ENCODE measurements at regions of chr14 and their contacts with region 1.

Region 1: DNA sequence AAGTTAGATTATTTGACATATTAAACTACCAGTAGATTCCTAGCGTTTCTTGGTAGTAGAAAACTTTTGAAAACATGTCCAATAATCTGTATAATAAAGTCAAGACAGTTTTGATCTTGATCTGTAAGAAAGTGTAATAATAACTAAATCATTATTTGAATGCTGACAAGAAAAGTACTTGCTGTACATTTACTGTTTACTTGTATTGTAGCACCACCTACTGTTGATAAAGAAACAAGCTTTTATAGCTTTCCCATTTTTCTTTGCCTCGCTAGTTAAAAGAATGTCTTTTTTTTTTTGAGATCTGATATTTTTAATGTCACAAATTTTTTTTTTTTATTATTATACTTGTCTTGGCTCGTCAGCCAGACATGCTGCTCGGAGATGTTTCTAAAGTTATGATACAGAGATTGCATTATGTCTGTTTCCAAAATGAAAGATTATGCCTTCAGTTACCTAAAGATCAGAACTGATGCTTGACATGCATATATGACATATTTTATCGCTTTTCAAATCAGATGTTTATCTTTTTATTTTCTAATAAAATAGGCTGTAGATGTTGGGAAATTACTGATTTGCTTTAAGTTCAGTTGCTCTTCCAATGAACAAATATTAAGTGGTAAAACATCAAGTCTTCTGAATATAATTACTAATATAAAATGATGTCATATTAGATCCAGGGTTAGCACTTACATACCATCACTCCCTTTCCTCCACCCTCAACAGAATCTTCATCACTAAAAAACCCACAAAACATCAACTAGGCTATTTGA is 140.5 kb downstream of the AKAP6 start:
- DNase-seq: no peak

Region 2: GRCh38 chr14:32329146-32329545 is 140.4 kb before region 1 on chr14 and contains the start of gene AKAP6:
- intact Hi-C with region 1: loop called (anchors 5 kb)
- DNase-seq: peak in 8 of 10 donors; percentile 43 to 92 (median 70)

Region 3: GRCh38 chr14:32509632-32510187 is 40.1 kb after region 1 on chr14:
- intact Hi-C with region 1: loop called (anchors 5 kb)
- DNase-seq: peak; percentile 43 to 96 (median 76)

Region 4: DNA sequence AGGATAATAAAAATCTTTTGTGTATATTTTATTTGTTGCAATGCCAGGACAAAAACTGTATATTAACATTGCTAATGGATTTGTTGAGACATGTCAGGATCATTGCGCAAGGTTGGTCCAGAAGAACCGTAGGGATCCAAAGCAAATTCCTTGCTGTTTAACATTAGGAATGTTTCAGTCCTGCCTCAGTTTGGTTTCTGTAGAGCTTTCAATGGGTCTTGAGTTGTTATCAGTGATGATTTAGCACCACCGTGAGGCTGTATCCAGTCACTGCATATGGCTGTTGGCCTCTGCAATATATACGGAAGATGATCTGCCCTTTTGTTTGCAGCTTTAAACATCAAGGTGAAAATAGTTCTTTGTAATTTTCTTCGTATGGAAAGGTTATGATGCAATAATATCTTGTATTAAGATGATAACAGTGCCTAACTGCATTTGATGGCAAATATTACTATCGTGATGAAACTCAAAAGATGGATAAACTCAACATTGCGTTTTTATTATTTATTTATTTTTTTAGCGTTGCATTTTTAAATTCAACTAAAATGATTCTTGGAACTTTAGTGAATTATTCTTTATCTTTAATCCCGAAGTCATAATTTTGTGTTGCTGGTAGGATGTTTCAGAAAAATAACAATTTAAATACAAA is 90.8 kb after region 1 on chr14:
- intact Hi-C with region 1: loop called (anchors 10 kb)
- DNase-seq: peak in 7 of 10 donors; percentile 26 to 80 (median 61)

Measured in posterior cingulate gyrus (tissue), 11 donors.